ENCODE measurements at regions of chr10 and their contacts with region 1.

Region 1: GRCh38 chr10:23314835-23315239 is 29.8 kb downstream of the C10orf67 start:
- DNase-seq: peak; percentile 76
- ATAC-seq: peak; percentile 39
- H3K4me3 Mint-ChIP-seq: no peak overlapping the region
- H3K27ac Mint-ChIP-seq: no peak overlapping the region
- H3K4me1 Mint-ChIP-seq: no peaks in the 10 kb centered on the region
- H3K27me3 Mint-ChIP-seq: peaks cover 3% of the 10 kb centered on the region

Region 2: GRCh38 chr10:23158370-23158769 is 156.5 kb before region 1 on chr10:
- CTCF ChIA-PET with region 1: interaction called, 16 read pairs
- POLR2A ChIA-PET with region 1: no interaction called
- DNase-seq: peak; percentile 59
- ATAC-seq: peak; percentile 76
- H3K4me3 Mint-ChIP-seq: no peak overlapping the region
- H3K27ac Mint-ChIP-seq: no peak overlapping the region
- H3K4me1 Mint-ChIP-seq: peaks cover 9% of the 10 kb centered on the region
- H3K27me3 Mint-ChIP-seq: peaks cover 9% of the 10 kb centered on the region

Region 3: GRCh38 chr10:23293145-23293724 is 21.6 kb before region 1 on chr10:
- CTCF ChIA-PET with region 1: interaction called, 10 read pairs
- POLR2A ChIA-PET with region 1: no interaction called
- DNase-seq: peak; percentile 58
- ATAC-seq: peak; percentile 67
- H3K4me3 Mint-ChIP-seq: no peak overlapping the region
- H3K27ac Mint-ChIP-seq: no peak overlapping the region
- H3K4me1 Mint-ChIP-seq: no peaks in the 10 kb centered on the region
- H3K27me3 Mint-ChIP-seq: peaks cover 13% of the 10 kb centered on the region

Region 4: DNA sequence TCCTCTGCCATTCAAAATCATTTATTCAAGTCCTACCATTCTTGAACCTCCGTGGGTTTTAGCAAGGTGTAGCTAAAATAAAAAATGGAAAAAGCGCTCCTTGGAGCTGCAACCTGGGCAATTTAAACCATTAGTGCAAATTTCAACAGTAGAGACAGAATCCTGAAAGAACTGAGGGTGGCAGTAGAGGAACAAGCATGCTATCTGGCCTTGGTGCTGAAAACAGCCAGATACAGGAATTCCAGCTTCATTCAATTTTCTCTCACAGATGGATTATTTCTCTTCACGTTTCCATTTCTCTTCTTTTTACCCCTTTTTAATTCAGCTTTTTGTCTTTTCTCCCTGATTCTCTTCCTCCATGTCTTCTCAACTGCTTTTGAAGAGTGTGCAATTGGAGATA is 201.7 kb after region 1 on chr10:
- CTCF ChIA-PET with region 1: interaction called, 26 read pairs
- POLR2A ChIA-PET with region 1: no interaction called
- DNase-seq: no peak
- ATAC-seq: no peak
- H3K4me3 Mint-ChIP-seq: no peak overlapping the region
- H3K27ac Mint-ChIP-seq: no peak overlapping the region
- H3K4me1 Mint-ChIP-seq: peaks cover 15% of the 10 kb centered on the region
- H3K27me3 Mint-ChIP-seq: peaks cover 2% of the 10 kb centered on the region

Region 5: DNA sequence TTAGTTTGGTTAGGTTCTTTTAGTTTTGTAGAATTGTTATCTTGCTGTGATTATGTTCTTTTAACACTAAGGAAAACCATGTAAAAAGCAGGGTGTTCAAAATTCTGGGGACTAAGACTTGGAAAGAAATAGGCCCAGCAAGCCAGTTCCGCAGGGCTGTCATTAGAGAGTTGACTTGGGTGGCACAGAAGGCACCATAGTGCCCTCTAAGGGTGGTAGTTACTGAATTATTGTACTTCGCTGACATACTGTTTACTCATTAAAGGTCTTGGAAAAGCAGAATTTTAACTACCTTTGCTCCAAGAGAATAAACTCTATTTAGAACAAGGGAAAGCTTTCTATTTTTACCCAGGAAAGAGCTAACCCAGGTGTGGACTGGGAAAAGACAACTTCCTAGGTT is 210.6 kb after region 1 on chr10:
- CTCF ChIA-PET with region 1: interaction called, 80 read pairs
- POLR2A ChIA-PET with region 1: interaction called, 3 read pairs
- DNase-seq: no peak
- ATAC-seq: no peak
- H3K4me3 Mint-ChIP-seq: no peak overlapping the region
- H3K27ac Mint-ChIP-seq: no peak overlapping the region
- H3K4me1 Mint-ChIP-seq: no peaks in the 10 kb centered on the region
- H3K27me3 Mint-ChIP-seq: peaks cover 3% of the 10 kb centered on the region

Region 6: DNA sequence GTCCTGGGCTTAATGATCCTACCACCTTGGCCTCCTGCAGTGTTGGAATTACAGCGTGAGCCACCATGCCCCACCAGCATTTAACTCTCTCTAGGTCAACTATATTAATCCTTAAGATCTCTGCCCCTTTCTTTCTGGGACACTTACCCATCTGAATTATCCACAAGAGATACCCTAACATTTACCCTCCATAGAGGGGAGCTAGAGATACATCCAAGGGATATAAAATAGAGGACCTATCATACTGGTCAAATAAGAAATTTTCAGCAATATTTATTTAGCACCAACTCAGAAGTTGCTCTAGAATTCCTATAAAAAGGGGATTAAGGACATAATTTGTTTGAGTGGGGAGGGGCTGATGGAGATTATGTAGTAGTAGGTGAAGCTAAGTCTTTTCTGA is 220.5 kb after region 1 on chr10:
- CTCF ChIA-PET with region 1: interaction called, 80 read pairs
- POLR2A ChIA-PET with region 1: no interaction called
- DNase-seq: no peak
- ATAC-seq: no peak
- H3K4me3 Mint-ChIP-seq: no peak overlapping the region
- H3K27ac Mint-ChIP-seq: no peak overlapping the region
- H3K4me1 Mint-ChIP-seq: peaks cover 33% of the 10 kb centered on the region
- H3K27me3 Mint-ChIP-seq: no peaks in the 10 kb centered on the region

Region 7: DNA sequence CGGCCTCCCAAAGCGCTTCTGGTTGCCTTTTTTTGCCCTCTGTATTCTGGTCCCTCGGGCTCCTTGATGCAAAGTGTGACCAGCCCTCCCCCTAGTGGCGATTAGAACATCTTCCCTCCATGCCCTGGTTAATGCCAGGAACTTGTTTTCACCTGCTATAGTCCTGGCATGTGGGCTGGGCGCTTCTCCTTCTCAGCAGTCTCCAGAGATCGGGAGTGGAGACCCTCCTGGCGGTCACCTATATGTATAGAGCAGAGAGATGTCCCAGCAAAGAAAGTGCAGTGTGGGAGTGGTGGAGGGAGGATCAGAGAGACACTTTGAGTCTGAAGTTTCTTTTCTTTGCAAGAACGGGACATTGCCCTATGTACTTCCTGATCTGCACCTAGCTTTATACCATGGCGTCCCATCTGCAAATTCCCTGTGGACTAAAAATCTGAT is 388.2 kb after region 1 on chr10:
- CTCF ChIA-PET with region 1: interaction called, 22 read pairs
- POLR2A ChIA-PET with region 1: no interaction called
- DNase-seq: peak; percentile 68
- ATAC-seq: peak; percentile 85
- H3K4me3 Mint-ChIP-seq: no peak overlapping the region
- H3K27ac Mint-ChIP-seq: no peak overlapping the region
- H3K4me1 Mint-ChIP-seq: peaks cover 4% of the 10 kb centered on the region
- H3K27me3 Mint-ChIP-seq: peaks cover 13% of the 10 kb centered on the region